ENCODE measurements at regions of chr11 and their contacts with region 1.

Region 1: DNA sequence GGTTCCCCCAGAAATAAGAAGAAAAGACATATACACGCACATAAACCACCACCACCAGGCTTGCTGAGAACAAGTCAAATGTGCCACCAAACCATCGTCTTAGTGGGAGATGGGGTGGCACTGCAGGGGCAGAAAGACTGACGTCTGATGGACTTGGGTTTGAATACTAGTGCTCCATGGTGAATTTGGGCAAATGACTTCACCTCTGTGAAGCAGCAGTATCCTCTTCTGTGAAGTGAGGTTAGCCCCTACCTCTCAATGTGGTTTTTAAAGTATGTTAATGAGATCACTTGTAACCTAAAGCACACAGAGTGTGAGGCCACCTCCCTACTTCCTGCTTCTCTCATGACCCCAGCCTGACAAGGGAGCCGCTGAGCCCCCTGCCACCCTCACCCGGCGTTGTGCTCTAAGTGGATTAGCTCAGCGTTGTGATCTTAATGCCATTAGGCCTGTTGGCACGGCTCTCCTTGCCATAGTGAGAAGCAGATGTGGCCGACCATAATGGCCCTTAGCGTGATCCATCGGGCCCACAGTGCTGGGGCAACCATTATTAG is 14.4 kb downstream of the ZBTB16 start:
- DNase-seq: peak; percentile 17 to 78 (median 57)
- H3K4me3 ChIP-seq: no peak overlapping the region
- H3K4me3 Mint-ChIP-seq: peak overlapping the region; percentile 59 to 98 (median 80)
- H3K27ac ChIP-seq: peak overlapping the region; percentile 34
- H3K27ac Mint-ChIP-seq: peak overlapping the region; percentile 5 to 99 (median 96)
- H3K4me1 ChIP-seq: peaks cover 45% of the 10 kb centered on the region
- H3K4me1 Mint-ChIP-seq: peaks cover 64 to 68% (median 65%) of the 10 kb centered on the region in 3 donors
- H3K27me3 ChIP-seq: no peaks in the 10 kb centered on the region
- H3K27me3 Mint-ChIP-seq: no peaks in the 10 kb centered on the region

Region 2: GRCh38 chr11:114059278-114059983 is 14.5 kb before region 1 on chr11 and contains the start of gene ZBTB16:
- CTCF ChIA-PET with region 1: interaction called, 10 read pairs
- POLR2A ChIA-PET with region 1: interaction called, 4 read pairs
- DNase-seq: peak; percentile 38 to 71 (median 68)
- H3K4me3 ChIP-seq: peak within 1 kb of the TSS; percentile 69
- H3K4me3 Mint-ChIP-seq: peak within 1 kb of the TSS; percentile 88 to 96 (median 95)
- H3K27ac ChIP-seq: peak within 1 kb of the TSS; percentile 43
- H3K27ac Mint-ChIP-seq: peak within 1 kb of the TSS; percentile 23 to 98 (median 92)
- H3K4me1 ChIP-seq: peaks cover 8% of the 10 kb centered on the region
- H3K4me1 Mint-ChIP-seq: peaks cover 14 to 24% (median 16%) of the 10 kb centered on the region in 3 donors
- H3K27me3 ChIP-seq: peaks cover 15% of the 10 kb centered on the region
- H3K27me3 Mint-ChIP-seq: peaks cover 18 to 24% of the 10 kb centered on the region in 2 donors
- total RNA-seq, gene ZBTB16: 2.1 to 2.2 TPM

Measured in CD8-positive, alpha-beta memory T cell (primary cell).